CD8-positive, alpha-beta T cell (primary cell): ENCODE measurements at regions of chr19 and their contacts with region 1.

Region 1: GRCh38 chr19:46016426-46017094 is 6.3 kb downstream of the PGLYRP1 start:
- DNase-seq: peak; percentile 59 to 90 (median 83)
- ATAC-seq: peak; percentile 77
- H3K4me3 ChIP-seq: peak overlapping the region; percentile 93
- H3K4me3 Mint-ChIP-seq: peak overlapping the region; percentile 87
- H3K27ac ChIP-seq: peak overlapping the region; percentile 0 to 25
- H3K27ac Mint-ChIP-seq: peak overlapping the region; percentile 28
- H3K4me1 ChIP-seq: peaks cover 12% of the 10 kb centered on the region
- H3K4me1 Mint-ChIP-seq: peaks cover 17% of the 10 kb centered on the region
- H3K27me3 ChIP-seq: peaks cover 0 to 3% of the 10 kb centered on the region in 2 experiments
- H3K27me3 Mint-ChIP-seq: peaks cover 11% of the 10 kb centered on the region
- CTCF ChIP-seq: peak; percentile 84

Region 2: DNA sequence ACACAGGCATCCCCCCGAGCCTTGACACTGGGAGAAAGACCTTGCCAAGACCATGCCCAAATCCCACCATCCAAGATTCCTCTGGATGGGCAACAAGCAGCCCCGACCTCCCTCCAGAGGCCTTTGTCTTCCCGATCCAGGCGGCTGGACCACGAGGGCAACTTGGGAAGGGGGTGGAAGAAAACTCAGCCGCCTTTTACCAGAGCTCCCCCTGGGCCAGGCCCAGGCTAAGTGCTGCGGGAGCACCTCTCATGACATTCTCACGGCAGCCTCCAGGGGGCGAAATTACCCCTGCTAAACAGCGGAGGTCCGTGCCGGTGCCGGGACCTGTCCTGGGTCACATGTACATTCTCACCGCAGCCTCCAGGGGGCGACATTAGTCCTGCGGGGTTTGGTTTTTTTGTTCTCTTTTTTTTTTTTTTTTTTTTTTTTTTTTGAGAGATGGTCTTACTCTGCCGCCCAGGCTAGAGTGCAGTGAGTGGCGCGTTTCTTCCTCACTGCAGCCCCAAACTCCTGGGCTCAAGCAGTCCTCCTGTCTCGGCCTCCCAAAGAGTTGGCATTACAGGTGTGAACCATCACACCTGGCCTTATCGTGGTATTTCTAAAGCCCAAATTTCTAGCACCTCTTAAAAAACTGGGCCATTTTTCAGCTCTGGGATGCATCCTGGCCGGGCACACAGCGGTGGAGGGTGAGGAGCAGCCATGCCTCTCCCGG is 199.4 kb before region 1 on chr19:
- CTCF ChIA-PET with region 1: interaction called, 6 read pairs
- POLR2A ChIA-PET with region 1: no interaction called
- intact Hi-C with region 1: loop called in 1 of 2 experiments (anchors 2 kb)
- DNase-seq: peak; percentile 93 to 99 (median 95)
- ATAC-seq: peak; percentile 100
- H3K4me3 ChIP-seq: no peak overlapping the region
- H3K4me3 Mint-ChIP-seq: peak overlapping the region; percentile 18
- H3K27ac ChIP-seq: no peak overlapping the region
- H3K27ac Mint-ChIP-seq: no peak overlapping the region
- H3K4me1 ChIP-seq: peaks cover 16% of the 10 kb centered on the region
- H3K4me1 Mint-ChIP-seq: peaks cover 7% of the 10 kb centered on the region
- H3K27me3 ChIP-seq: peaks cover 0 to 5% of the 10 kb centered on the region in 2 experiments
- H3K27me3 Mint-ChIP-seq: peaks cover 8% of the 10 kb centered on the region
- CTCF ChIP-seq: peak; percentile 99

Region 3: GRCh38 chr19:45927565-45928261 is 88.8 kb before region 1 on chr19:
- CTCF ChIA-PET with region 1: no interaction called
- POLR2A ChIA-PET with region 1: no interaction called
- intact Hi-C with region 1: loop called (anchors 1 to 2 kb)
- DNase-seq: peak; percentile 72 to 94 (median 88)
- ATAC-seq: peak; percentile 100
- H3K4me3 ChIP-seq: no peak overlapping the region
- H3K4me3 Mint-ChIP-seq: no peak overlapping the region
- H3K27ac ChIP-seq: no peak overlapping the region
- H3K27ac Mint-ChIP-seq: peak overlapping the region; percentile 7
- H3K4me1 ChIP-seq: peaks cover 7% of the 10 kb centered on the region
- H3K4me1 Mint-ChIP-seq: peaks cover 8% of the 10 kb centered on the region
- H3K27me3 ChIP-seq: no peaks in the 10 kb centered on the region
- H3K27me3 Mint-ChIP-seq: peaks cover 4% of the 10 kb centered on the region
- CTCF ChIP-seq: peak; percentile 15

Region 4: DNA sequence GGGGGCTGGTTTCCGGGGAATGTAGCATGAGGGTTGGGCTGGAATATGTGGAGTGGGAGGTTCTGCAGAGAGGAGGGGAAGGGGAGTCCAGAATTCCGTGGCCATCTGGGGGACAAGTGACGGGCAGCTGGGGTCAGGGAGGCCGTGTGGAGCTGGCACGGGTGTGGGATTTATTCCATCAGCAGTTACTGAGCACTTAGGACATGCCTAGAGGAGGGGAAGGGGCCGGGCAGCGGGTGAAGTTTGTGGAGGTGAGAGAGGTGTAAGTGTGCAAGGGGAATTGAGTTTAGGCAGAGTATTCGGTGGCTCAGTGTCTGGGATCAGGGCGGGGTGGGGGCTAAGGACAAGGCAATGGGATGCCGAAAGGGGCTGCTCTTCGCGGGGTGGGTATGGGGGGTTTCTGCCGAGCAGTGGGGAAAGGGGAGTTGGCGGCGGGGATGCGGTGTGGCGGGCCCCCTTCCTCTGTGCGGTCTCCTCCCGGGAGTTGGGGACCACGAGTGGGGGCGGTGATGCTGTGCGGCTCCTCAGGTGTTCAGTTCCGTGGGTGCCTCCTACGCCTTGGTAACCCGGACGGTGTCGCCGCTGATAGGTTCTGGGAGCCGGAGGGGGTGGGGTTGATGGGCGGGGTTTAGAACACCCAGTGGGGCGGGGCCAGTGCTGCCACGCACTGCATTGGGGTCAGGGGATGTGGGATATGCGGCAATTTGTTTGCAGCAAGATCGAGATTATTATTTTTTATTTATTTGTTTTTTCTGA is 15.9 kb before region 1 on chr19:
- CTCF ChIA-PET with region 1: interaction called, 10 read pairs
- POLR2A ChIA-PET with region 1: interaction called, 5 read pairs
- intact Hi-C with region 1: loop called (anchors 1 kb)
- DNase-seq: peak; percentile 59 to 87 (median 74)
- ATAC-seq: peak; percentile 99
- H3K4me3 ChIP-seq: peak overlapping the region; percentile 18 to 43
- H3K4me3 Mint-ChIP-seq: peak overlapping the region; percentile 73
- H3K27ac ChIP-seq: no peak overlapping the region
- H3K27ac Mint-ChIP-seq: no peak overlapping the region
- H3K4me1 ChIP-seq: peaks cover 18% of the 10 kb centered on the region
- H3K4me1 Mint-ChIP-seq: peaks cover 35% of the 10 kb centered on the region
- H3K27me3 ChIP-seq: no peaks in the 10 kb centered on the region
- H3K27me3 Mint-ChIP-seq: no peaks in the 10 kb centered on the region
- CTCF ChIP-seq: no peak